ENCODE measurements at regions of chr9 and their contacts with region 1.

Region 1: GRCh38 chr9:6109986-6110385 is 94.6 kb upstream of the RANBP6 start:
- DNase-seq: no peak
- ATAC-seq: no peak
- H3K4me3 ChIP-seq: no peak overlapping the region
- H3K4me3 Mint-ChIP-seq: no peak overlapping the region
- H3K27ac ChIP-seq: no peak overlapping the region
- H3K27ac Mint-ChIP-seq: peak overlapping the region; percentile 7
- H3K4me1 ChIP-seq: peaks cover 14% of the 10 kb centered on the region
- H3K4me1 Mint-ChIP-seq: peaks cover 18% of the 10 kb centered on the region
- H3K27me3 ChIP-seq: no peaks in the 10 kb centered on the region
- H3K27me3 Mint-ChIP-seq: no peaks in the 10 kb centered on the region
- CTCF ChIP-seq: no peak

Region 2: DNA sequence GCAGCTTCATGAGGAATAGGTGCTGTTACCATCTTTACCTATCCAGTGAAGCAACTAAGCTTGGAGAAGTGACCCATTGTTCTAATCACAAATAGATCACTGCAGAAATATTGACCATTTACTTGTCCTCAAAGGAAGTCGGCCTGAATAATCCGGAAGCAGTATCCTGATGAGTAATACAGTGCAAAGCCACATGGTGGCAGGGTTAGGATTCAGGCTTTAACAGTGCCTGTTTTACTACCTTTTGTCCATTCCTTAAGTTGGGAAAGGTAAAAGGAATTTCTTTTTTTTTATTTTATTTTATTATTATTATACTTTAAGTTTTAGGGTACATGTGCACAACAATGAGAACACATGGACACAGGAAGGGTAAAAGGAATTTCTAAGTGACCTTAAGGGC is 984.1 kb after region 1 on chr9:
- CTCF ChIA-PET with region 1: no interaction called
- POLR2A ChIA-PET with region 1: no interaction called
- intact Hi-C with region 1: loop called in 1 of 2 experiments (anchors 10 kb)
- DNase-seq: no peak
- ATAC-seq: no peak
- H3K4me3 ChIP-seq: no peak overlapping the region
- H3K4me3 Mint-ChIP-seq: no peak overlapping the region
- H3K27ac ChIP-seq: no peak overlapping the region
- H3K27ac Mint-ChIP-seq: no peak overlapping the region
- H3K4me1 ChIP-seq: no peaks in the 10 kb centered on the region
- H3K4me1 Mint-ChIP-seq: no peaks in the 10 kb centered on the region
- H3K27me3 ChIP-seq: no peaks in the 10 kb centered on the region
- H3K27me3 Mint-ChIP-seq: no peaks in the 10 kb centered on the region
- CTCF ChIP-seq: no peak